ENCODE measurements at regions of chr17 and their contacts with region 1.

Region 1: DNA sequence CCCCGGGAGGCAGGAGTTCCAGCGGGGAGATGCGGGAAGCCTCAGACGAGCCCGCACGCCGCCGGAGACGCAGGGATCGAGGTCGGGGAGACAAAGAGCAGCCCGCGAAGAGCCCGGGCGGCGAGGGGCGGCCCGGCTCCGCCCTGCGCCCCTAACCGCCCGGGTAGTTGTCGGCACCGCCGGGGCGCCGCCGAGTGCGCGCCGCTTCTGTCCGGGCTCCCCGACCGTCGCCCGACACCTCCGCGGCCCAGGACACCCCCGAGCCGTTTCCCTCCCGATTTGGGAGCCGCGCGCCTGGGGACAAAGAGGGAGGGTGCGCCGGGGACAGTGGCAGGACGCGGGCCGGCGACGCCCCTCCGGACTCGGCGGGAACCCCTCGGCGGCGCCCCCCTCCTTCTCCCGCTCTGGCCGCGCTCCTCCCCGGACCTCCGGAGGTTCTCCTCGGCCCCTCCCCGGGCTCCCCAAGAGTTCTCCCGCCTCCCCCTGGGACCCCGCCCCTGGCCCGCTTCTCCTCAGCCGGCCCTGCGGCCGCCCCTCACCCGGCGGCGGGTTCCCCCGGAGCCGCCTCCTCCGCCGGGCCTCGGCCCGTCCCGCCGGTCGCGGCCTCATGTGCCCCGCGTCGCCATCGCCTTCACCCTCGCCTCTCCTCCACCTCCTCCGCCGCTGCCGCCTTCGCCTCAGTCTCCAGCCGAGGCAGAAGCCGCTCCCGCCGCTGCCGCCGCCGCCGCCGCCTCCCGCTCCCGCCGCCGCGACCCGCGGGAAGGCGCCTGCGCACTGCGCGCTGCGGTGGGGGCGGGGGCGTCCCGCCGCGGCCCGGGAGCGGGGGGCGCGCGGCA is at the start of gene GJC1:
- DNase-seq: peak; percentile 64
- H3K4me3 ChIP-seq: peak within 1 kb of the TSS; percentile 80
- H3K27ac ChIP-seq: peak within 1 kb of the TSS; percentile 94
- H3K4me1 ChIP-seq: peaks cover 58% of the 10 kb centered on the region
- H3K27me3 ChIP-seq: peaks cover 37% of the 10 kb centered on the region
- CTCF ChIP-seq: no peak
- total RNA-seq, gene GJC1: 18.8 TPM

Region 2: GRCh38 chr17:44786551-44787081 is 43.1 kb before region 1 on chr17:
- intact Hi-C with region 1: loop called (anchors 5 kb)
- DNase-seq: peak; percentile 58
- H3K4me3 ChIP-seq: peak overlapping the region; percentile 22
- H3K27ac ChIP-seq: peak overlapping the region; percentile 85
- H3K4me1 ChIP-seq: peaks cover 50% of the 10 kb centered on the region
- H3K27me3 ChIP-seq: no peaks in the 10 kb centered on the region
- CTCF ChIP-seq: no peak

Measured in left ventricle myocardium inferior (tissue), 1 donor.